ENCODE measurements at regions of chr9 and their contacts with region 1.

Region 1: DNA sequence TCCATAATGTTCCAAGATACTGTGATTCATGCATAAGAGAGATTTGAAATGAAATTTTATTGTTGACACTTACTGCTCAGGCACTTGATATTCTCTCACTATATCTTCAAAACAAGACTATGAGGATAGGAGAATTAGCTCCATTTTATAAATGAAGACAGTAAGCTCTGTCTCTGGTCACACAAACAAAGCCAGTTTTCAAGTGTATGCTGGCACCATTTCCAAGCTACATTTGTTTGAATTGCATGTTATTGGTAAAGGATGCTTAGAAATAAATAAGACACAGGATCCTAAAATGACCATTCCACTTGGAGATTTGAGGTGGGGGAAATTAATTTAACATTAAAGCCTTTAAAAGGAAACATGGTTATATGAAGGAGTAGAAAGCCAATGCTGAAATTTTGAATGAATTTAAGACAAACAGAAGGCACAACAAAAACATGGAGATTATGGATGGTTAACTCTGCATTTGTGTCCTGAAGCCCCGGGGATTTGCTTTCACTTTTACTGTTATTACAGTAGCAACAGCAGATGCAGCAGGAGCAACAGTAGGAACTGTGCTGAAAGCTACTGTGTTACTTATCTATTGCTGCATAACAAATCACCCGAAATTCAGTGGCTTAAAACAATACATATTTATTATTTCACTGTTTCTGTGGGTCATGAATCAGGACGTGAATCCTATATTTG is 79.7 kb upstream of the ASTN2 start:
- DNase-seq: no peak
- H3K4me3 ChIP-seq: no peak overlapping the region
- H3K27ac ChIP-seq: no peak overlapping the region
- H3K4me1 ChIP-seq: peaks cover 0 to 7% (median 3%) of the 10 kb centered on the region in 4 donors
- H3K27me3 ChIP-seq: no peaks in the 10 kb centered on the region
- CTCF ChIP-seq: no peak
- EP300 ChIP-seq: no peak
- POLR2A ChIP-seq: no peak

Region 2: GRCh38 chr9:117546894-117547678 is 52.5 kb after region 1 on chr9:
- in situ Hi-C with region 1: loop called in 1 of 4 experiments (anchors 5 kb)
- intact Hi-C with region 1: no loop called
- DNase-seq: peak; percentile 26
- H3K4me3 ChIP-seq: no peak overlapping the region
- H3K27ac ChIP-seq: no peak overlapping the region
- H3K4me1 ChIP-seq: peaks cover 0 to 6% (median 0%) of the 10 kb centered on the region in 4 donors
- H3K27me3 ChIP-seq: no peaks in the 10 kb centered on the region
- CTCF ChIP-seq: no peak
- EP300 ChIP-seq: no peak
- POLR2A ChIP-seq: no peak

Region 3: DNA sequence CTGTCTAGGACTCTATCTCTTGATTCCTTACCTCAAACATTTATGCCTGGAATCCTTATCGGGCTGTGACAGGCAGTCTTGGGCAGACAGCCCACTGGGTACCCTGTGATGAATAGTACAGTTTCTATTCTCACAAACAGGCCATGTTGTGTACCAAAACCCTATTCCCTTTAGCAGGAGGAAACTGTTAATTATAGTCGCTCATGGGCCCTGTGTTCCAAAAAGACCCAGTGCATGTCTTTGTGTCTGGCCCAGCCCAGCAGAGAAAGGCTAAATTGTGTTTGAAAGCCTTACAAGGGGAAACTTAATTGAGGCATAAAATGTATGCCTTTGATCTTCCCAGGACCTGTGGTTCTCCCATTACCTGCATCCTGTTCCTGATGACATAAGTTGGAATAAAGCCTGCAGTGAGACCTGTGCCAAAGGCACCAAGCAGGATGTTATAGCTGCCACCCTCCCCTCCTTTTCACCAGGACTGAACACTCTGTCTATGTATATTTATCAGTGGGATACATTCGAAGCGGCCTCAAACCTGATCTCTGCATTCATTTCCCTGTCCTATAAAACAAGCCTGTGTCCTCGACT is 252.9 kb after region 1 on chr9:
- in situ Hi-C with region 1: no loop called
- intact Hi-C with region 1: no loop called
- DNase-seq: no peak
- H3K4me3 ChIP-seq: no peak overlapping the region
- H3K27ac ChIP-seq: no peak overlapping the region
- H3K4me1 ChIP-seq: peaks cover 0 to 12% (median 3%) of the 10 kb centered on the region in 4 donors
- H3K27me3 ChIP-seq: peaks cover 20% of the 10 kb centered on the region
- CTCF ChIP-seq: no peak
- EP300 ChIP-seq: no peak
- POLR2A ChIP-seq: no peak